Endothelial cell of umbilical vein (primary cell): ENCODE measurements at regions of chr7 and their contacts with region 1.

Region 1: DNA sequence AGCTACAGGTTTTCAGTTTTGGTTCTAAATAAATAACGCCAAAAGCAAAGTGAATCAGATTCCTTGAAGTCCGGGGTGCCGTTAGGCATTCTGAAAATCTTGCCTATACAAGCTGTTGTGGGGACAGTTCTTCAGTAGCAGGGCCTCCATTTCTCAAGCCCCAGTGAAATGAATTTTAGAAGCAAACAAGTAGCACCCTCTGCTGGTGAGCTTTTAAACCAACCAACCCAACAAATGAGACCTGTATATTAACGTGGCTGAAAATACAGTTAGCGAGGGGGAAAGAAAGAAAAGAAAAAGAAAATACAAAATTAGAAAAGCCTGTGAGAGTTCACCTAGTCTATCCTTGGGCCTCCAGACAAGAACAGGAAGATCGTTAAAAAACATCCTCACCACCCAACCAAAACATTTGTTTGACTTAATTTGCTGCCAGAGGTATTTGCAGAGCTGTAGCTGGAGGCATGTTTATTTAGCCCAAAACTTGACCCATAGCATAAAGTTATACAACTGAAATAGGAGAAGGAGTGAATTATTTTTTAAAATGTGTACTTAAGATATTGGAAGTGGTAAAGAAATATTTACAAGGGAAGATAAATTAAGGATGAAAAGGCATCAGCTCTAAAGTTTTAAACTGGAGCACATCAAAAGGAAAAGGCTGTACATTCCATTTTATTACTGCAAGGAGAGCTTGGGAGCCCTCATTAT is 98.9 kb downstream of the DYNC1I1 start:
- DNase-seq: peak; percentile 72
- H3K4me3 ChIP-seq: no peak overlapping the region
- H3K27ac ChIP-seq: no peak overlapping the region
- H3K4me1 ChIP-seq: peaks cover 29% of the 10 kb centered on the region
- H3K27me3 ChIP-seq: no peaks in the 10 kb centered on the region
- CTCF ChIP-seq: peak; percentile 49 to 66
- POLR2A ChIP-seq: no peak

Region 2: GRCh38 chr7:95527033-95527775 is 344.0 kb before region 1 on chr7:
- CTCF ChIA-PET with region 1: interaction called, 4 read pairs
- POLR2A ChIA-PET with region 1: no interaction called
- dilution Hi-C with region 1: no loop called
- intact Hi-C with region 1: loop called (anchors 5 kb)
- DNase-seq: peak; percentile 52
- H3K4me3 ChIP-seq: no peak overlapping the region
- H3K27ac ChIP-seq: no peak overlapping the region
- H3K4me1 ChIP-seq: peaks cover 2% of the 10 kb centered on the region
- H3K27me3 ChIP-seq: peaks cover 12 to 13% of the 10 kb centered on the region in 2 experiments
- CTCF ChIP-seq: peak; percentile 75 to 78
- POLR2A ChIP-seq: no peak

Region 3: DNA sequence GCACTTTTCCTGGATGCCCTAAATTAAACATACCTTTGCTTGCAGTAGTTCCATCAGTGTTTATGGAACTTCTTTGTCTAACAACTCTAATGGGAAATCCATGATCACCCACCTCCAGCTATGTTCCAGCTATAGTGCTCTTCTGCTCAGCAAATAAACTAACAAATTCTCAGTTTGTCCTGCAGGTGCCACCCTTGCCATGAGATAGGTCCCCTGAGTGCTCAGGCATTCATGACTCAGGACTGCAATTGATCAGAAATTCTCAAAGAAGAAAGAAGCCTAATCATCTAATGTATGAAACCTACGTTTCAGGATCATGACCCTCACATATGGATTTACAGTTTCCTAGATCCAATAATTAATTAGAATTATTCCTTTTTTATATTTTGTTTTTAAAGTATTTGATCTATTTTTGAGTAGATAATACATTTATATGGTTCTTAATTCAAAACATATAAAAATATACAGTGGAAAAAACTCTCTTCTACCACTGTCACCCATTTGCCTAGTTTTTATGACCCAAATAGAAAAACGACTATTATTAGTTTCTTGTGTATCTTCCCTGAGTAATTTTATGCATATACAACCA is 147.5 kb before region 1 on chr7:
- CTCF ChIA-PET with region 1: interaction called, 274 read pairs
- POLR2A ChIA-PET with region 1: no interaction called
- dilution Hi-C with region 1: no loop called
- intact Hi-C with region 1: loop called (anchors 1 kb)
- DNase-seq: peak; percentile 76
- H3K4me3 ChIP-seq: no peak overlapping the region
- H3K27ac ChIP-seq: no peak overlapping the region
- H3K4me1 ChIP-seq: no peaks in the 10 kb centered on the region
- H3K27me3 ChIP-seq: peaks cover 7 to 13% of the 10 kb centered on the region in 2 experiments
- CTCF ChIP-seq: peak; percentile 31 to 32
- POLR2A ChIP-seq: no peak

Region 4: GRCh38 chr7:95859434-95859833 is 11.8 kb before region 1 on chr7:
- CTCF ChIA-PET with region 1: interaction called, 14 read pairs
- POLR2A ChIA-PET with region 1: no interaction called
- dilution Hi-C with region 1: no loop called
- intact Hi-C with region 1: no loop called
- DNase-seq: no peak
- H3K4me3 ChIP-seq: no peak overlapping the region
- H3K27ac ChIP-seq: no peak overlapping the region
- H3K4me1 ChIP-seq: no peaks in the 10 kb centered on the region
- H3K27me3 ChIP-seq: no peaks in the 10 kb centered on the region
- CTCF ChIP-seq: no peak
- POLR2A ChIP-seq: no peak

Region 5: DNA sequence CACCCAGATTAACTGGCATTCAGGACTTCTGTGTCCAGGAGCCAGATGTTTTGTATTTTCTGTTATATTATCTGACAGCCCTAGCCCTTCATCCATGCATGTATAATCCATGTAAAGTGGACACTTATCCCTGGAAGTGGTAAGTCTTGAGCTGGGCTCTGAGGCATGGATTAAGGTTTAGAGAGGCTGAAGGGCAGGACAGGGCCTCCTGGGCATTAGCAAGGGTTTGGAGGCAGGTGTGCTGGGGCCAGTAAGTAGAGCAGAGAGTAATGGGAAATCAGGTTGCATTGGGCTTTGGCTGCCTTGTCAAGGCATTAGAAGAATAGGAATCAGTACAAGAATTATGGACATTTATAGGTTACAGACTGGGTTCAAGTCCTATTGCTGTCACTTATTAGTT is 39.1 kb after region 1 on chr7:
- CTCF ChIA-PET with region 1: interaction called, 14 read pairs
- POLR2A ChIA-PET with region 1: no interaction called
- dilution Hi-C with region 1: no loop called
- intact Hi-C with region 1: no loop called
- DNase-seq: no peak
- H3K4me3 ChIP-seq: no peak overlapping the region
- H3K27ac ChIP-seq: no peak overlapping the region
- H3K4me1 ChIP-seq: no peaks in the 10 kb centered on the region
- H3K27me3 ChIP-seq: peaks cover 7 to 13% of the 10 kb centered on the region in 2 experiments
- CTCF ChIP-seq: no peak
- POLR2A ChIP-seq: no peak